Activated B cell treated with CpG ODN at 0.5 μM for 24 hours (primary cell): ENCODE measurements at regions of chr6 and their contacts with region 1.

Region 1: GRCh38 chr6:32195652-32195901 is 3.1 kb upstream of the GPSM3 start:
- DNase-seq: peak; percentile 99
- ATAC-seq: peak; percentile 83
- H3K4me3 Mint-ChIP-seq: peak overlapping the region; percentile 99
- H3K27ac Mint-ChIP-seq: peak overlapping the region; percentile 100
- H3K4me1 Mint-ChIP-seq: peaks cover 57% of the 10 kb centered on the region
- H3K27me3 Mint-ChIP-seq: peaks cover 1% of the 10 kb centered on the region
- CTCF ChIP-seq: no peak

Region 2: GRCh38 chr6:32118782-32119628 is 76.6 kb before region 1 on chr6:
- CTCF ChIA-PET with region 1: interaction called, 11 read pairs
- POLR2A ChIA-PET with region 1: interaction called, 8 read pairs
- intact Hi-C with region 1: no loop called
- DNase-seq: peak; percentile 57
- ATAC-seq: peak; percentile 94
- H3K4me3 Mint-ChIP-seq: no peak overlapping the region
- H3K27ac Mint-ChIP-seq: peak overlapping the region; percentile 56
- H3K4me1 Mint-ChIP-seq: peaks cover 8% of the 10 kb centered on the region
- H3K27me3 Mint-ChIP-seq: no peaks in the 10 kb centered on the region
- CTCF ChIP-seq: peak; percentile 57

Region 3: GRCh38 chr6:32177788-32178546 is 17.6 kb before region 1 on chr6 and contains the start of gene RNF5:
- CTCF ChIA-PET with region 1: interaction called, 6 read pairs
- POLR2A ChIA-PET with region 1: interaction called, 102 read pairs
- intact Hi-C with region 1: loop called (anchors 1 kb)
- DNase-seq: peak; percentile 63
- ATAC-seq: peak; percentile 82
- H3K4me3 Mint-ChIP-seq: peak within 1 kb of the TSS; percentile 96
- H3K27ac Mint-ChIP-seq: peak within 1 kb of the TSS; percentile 99
- H3K4me1 Mint-ChIP-seq: peaks cover 54% of the 10 kb centered on the region
- H3K27me3 Mint-ChIP-seq: no peaks in the 10 kb centered on the region
- CTCF ChIP-seq: no peak
- total RNA-seq, gene RNF5: 39.7 and 41.8 TPM in 2 replicates

Region 4: GRCh38 chr6:32255199-32256153 is 59.9 kb after region 1 on chr6:
- CTCF ChIA-PET with region 1: no interaction called
- POLR2A ChIA-PET with region 1: interaction called, 10 read pairs
- intact Hi-C with region 1: loop called (anchors 1 kb)
- DNase-seq: peak; percentile 54
- ATAC-seq: peak; percentile 79
- H3K4me3 Mint-ChIP-seq: peak overlapping the region; percentile 84
- H3K27ac Mint-ChIP-seq: peak overlapping the region; percentile 92
- H3K4me1 Mint-ChIP-seq: peaks cover 77% of the 10 kb centered on the region
- H3K27me3 Mint-ChIP-seq: no peaks in the 10 kb centered on the region
- CTCF ChIP-seq: peak; percentile 39

Region 5: DNA sequence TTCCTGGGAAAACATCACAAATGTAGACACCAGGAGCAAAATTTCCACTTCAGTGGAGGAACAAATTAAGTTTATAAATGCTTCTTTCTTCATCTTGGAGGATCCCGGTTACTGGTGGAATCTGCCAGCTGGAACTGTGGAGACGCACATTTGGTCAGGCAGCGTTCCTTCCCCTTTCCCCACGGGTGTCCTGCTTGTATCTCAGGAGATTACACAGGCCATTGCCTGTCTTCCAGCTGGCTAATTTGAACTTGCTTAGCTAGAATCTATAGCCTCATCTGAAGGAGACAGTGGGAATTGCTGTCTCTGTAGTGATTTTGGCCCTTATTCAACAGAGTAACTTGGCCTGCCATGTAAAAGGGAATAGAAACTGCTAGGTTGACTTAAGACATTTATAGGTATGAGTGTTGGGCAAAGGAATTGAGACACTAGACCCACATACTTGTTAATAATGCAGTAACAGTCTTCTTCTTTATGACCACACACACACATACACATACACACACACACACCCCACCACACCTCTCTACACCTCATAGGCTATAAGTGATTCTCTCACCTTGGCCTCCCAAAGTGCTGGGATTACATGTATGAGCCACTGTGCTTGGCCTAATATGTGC is 141.7 kb after region 1 on chr6:
- CTCF ChIA-PET with region 1: no interaction called
- POLR2A ChIA-PET with region 1: no interaction called
- intact Hi-C with region 1: no loop called
- DNase-seq: no peak
- ATAC-seq: peak; percentile 45
- H3K4me3 Mint-ChIP-seq: no peak overlapping the region
- H3K27ac Mint-ChIP-seq: no peak overlapping the region
- H3K4me1 Mint-ChIP-seq: peaks cover 31% of the 10 kb centered on the region
- H3K27me3 Mint-ChIP-seq: no peaks in the 10 kb centered on the region
- CTCF ChIP-seq: no peak